ENCODE measurements at regions of chr12 and their contacts with region 1.

Region 1: GRCh38 chr12:15789220-15790171 is at the start of gene EPS8:
- DNase-seq: peak; percentile 93
- ATAC-seq: peak; percentile 95
- H3K4me3 ChIP-seq: peak within 1 kb of the TSS; percentile 47 to 86 (median 72)
- H3K4me3 Mint-ChIP-seq: peak within 1 kb of the TSS; percentile 87
- H3K27ac ChIP-seq: peak within 1 kb of the TSS in 1 of 2 donors; percentile 13
- H3K27ac Mint-ChIP-seq: peak within 1 kb of the TSS; percentile 64
- H3K4me1 ChIP-seq: peaks cover 15 to 16% of the 10 kb centered on the region in 2 donors
- H3K4me1 Mint-ChIP-seq: peaks cover 15% of the 10 kb centered on the region
- H3K27me3 ChIP-seq: peaks cover 0 to 51% (median 37%) of the 10 kb centered on the region in 4 experiments
- H3K27me3 Mint-ChIP-seq: peaks cover 53% of the 10 kb centered on the region
- CTCF ChIP-seq: no peak
- total RNA-seq, gene EPS8: 0.78 and 0.96 TPM in 2 replicates

Region 2: DNA sequence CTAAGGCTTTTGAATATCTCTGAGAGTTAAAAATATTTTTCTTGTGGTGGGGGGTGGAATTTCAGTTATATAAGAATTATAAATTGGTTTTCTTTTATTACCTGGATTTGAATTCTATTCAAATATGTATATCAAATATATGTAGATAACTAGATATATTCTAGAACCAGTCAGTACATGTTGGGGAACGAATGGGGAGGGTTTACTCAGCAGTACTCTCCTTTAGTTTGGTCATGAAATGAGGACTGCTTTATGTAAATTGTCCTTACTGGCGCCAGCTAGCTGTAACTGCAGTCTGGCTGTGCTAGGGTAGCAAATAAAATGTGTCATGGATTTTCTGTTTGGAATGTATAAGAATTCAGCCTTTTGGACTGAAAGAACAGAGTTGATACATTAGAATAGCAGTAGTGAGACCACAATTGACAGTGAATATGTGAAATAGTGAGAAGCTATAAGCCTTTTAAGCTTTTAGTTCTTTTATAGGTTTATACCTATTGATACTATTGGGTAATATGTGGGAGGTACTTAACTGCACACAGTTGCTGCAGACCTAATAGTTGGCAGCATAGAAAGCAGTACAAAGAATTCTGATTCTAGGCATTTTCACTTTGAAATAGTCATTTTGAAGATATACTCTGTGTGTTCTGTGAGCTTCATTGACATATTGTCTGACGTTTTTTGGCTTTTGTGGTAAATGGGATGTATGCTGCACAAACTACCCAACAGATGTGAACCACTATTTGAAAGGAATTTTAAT is 1395.0 kb before region 1 on chr12:
- CTCF ChIA-PET with region 1: no interaction called
- POLR2A ChIA-PET with region 1: no interaction called
- intact Hi-C with region 1: loop called (anchors 5 kb)
- DNase-seq: peak; percentile 71
- ATAC-seq: peak; percentile 69
- H3K4me3 ChIP-seq: peak overlapping the region in 4 of 5 experiments; percentile 0 to 55 (median 18)
- H3K4me3 Mint-ChIP-seq: peak overlapping the region; percentile 56
- H3K27ac ChIP-seq: peak overlapping the region; percentile 62 to 67
- H3K27ac Mint-ChIP-seq: peak overlapping the region; percentile 78
- H3K4me1 ChIP-seq: peaks cover 32 to 55% of the 10 kb centered on the region in 2 donors
- H3K4me1 Mint-ChIP-seq: peaks cover 69% of the 10 kb centered on the region
- H3K27me3 ChIP-seq: no peaks in the 10 kb centered on the region
- H3K27me3 Mint-ChIP-seq: no peaks in the 10 kb centered on the region
- CTCF ChIP-seq: no peak

Region 3: GRCh38 chr12:15575671-15576541 is 213.6 kb before region 1 on chr12:
- CTCF ChIA-PET with region 1: no interaction called
- POLR2A ChIA-PET with region 1: no interaction called
- intact Hi-C with region 1: loop called (anchors 10 kb)
- DNase-seq: no peak
- ATAC-seq: no peak
- H3K4me3 ChIP-seq: no peak overlapping the region
- H3K4me3 Mint-ChIP-seq: no peak overlapping the region
- H3K27ac ChIP-seq: no peak overlapping the region
- H3K27ac Mint-ChIP-seq: no peak overlapping the region
- H3K4me1 ChIP-seq: peaks cover 7 to 9% of the 10 kb centered on the region in 2 donors
- H3K4me1 Mint-ChIP-seq: peaks cover 6% of the 10 kb centered on the region
- H3K27me3 ChIP-seq: no peaks in the 10 kb centered on the region
- H3K27me3 Mint-ChIP-seq: no peaks in the 10 kb centered on the region
- CTCF ChIP-seq: no peak

Region 4: DNA sequence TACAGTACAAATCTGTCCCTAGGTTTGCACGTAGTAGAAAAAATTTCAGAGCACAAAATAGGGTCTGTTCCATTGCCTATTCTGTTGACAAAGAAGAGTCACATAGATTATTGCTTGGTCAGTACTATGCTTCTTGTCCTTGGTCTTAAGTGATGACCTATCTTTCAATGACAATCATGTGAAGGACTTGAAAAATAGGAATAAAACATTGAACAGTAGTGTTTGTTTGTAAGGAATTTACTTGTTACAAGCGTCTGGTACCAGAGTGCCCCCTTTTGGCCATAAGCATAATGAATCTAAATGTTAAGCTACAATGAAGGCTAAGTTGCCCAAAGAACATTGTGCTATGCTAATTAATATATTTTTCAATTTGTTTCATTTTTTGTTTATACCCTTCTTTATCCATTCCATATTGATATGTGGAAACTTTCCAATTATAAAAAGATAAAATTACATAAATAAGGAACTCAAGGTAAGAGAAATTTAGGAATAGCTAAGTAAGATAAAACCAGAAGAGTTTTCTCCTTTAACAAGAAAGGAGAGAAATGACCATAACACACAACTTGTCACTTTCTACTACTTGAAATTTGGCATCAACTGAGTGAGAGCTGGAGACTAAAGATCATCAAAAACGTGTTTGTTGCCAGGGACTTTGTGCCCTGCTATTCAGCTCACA is 205.0 kb before region 1 on chr12:
- CTCF ChIA-PET with region 1: interaction called, 11 read pairs
- POLR2A ChIA-PET with region 1: no interaction called
- intact Hi-C with region 1: loop called (anchors 10 kb)
- DNase-seq: peak; percentile 76
- ATAC-seq: peak; percentile 63
- H3K4me3 ChIP-seq: no peak overlapping the region
- H3K4me3 Mint-ChIP-seq: no peak overlapping the region
- H3K27ac ChIP-seq: no peak overlapping the region
- H3K27ac Mint-ChIP-seq: peak overlapping the region; percentile 65
- H3K4me1 ChIP-seq: no peaks in the 10 kb centered on the region
- H3K4me1 Mint-ChIP-seq: no peaks in the 10 kb centered on the region
- H3K27me3 ChIP-seq: no peaks in the 10 kb centered on the region
- H3K27me3 Mint-ChIP-seq: no peaks in the 10 kb centered on the region
- CTCF ChIP-seq: peak; percentile 86

Region 5: DNA sequence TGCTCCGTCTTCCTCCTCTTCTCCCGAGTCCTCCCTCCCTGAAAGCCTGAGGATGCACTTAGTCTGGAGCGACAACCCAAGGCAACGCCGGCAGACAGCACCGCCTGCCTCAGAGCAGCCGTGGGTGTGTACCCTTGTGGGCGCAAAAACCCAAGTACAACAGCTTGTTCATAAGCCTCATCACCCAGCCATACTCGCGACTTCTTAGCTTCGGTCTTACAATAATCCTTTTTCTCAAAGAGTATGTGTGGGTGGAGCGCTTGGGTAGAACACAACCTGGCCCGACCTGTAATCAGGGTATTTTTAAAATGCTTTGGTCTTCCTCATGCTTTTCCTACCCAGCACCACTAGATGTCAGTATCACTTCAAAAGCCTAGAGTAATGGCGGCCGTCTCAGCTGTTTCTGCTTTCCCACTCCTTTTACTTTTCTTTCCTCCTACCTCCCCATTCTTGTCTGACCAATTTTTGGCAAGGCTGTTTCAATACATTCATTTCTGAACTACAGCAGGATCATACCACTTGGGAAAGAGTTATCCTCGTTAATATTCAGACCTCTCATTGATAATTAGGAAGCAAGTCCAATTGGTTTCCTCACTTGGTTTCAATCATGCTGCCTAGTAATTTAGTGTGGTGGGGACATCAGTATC is 199.2 kb before region 1 on chr12:
- CTCF ChIA-PET with region 1: interaction called, 11 read pairs
- POLR2A ChIA-PET with region 1: no interaction called
- intact Hi-C with region 1: loop called (anchors 1 kb)
- DNase-seq: peak; percentile 79
- ATAC-seq: peak; percentile 91
- H3K4me3 ChIP-seq: peak overlapping the region in 1 of 5 experiments; percentile 20
- H3K4me3 Mint-ChIP-seq: peak overlapping the region; percentile 81
- H3K27ac ChIP-seq: no peak overlapping the region
- H3K27ac Mint-ChIP-seq: peak overlapping the region; percentile 64
- H3K4me1 ChIP-seq: peaks cover 6 to 8% of the 10 kb centered on the region in 2 donors
- H3K4me1 Mint-ChIP-seq: peaks cover 9% of the 10 kb centered on the region
- H3K27me3 ChIP-seq: no peaks in the 10 kb centered on the region
- H3K27me3 Mint-ChIP-seq: no peaks in the 10 kb centered on the region
- CTCF ChIP-seq: peak; percentile 91

Region 6: GRCh38 chr12:15634010-15634683 is 155.3 kb before region 1 on chr12:
- CTCF ChIA-PET with region 1: no interaction called
- POLR2A ChIA-PET with region 1: no interaction called
- intact Hi-C with region 1: no loop called
- DNase-seq: no peak
- ATAC-seq: no peak
- H3K4me3 ChIP-seq: no peak overlapping the region
- H3K4me3 Mint-ChIP-seq: no peak overlapping the region
- H3K27ac ChIP-seq: no peak overlapping the region
- H3K27ac Mint-ChIP-seq: no peak overlapping the region
- H3K4me1 ChIP-seq: no peaks in the 10 kb centered on the region
- H3K4me1 Mint-ChIP-seq: no peaks in the 10 kb centered on the region
- H3K27me3 ChIP-seq: no peaks in the 10 kb centered on the region
- H3K27me3 Mint-ChIP-seq: no peaks in the 10 kb centered on the region
- CTCF ChIP-seq: no peak

Region 7: GRCh38 chr12:15899282-15899870 is 109.9 kb after region 1 on chr12:
- CTCF ChIA-PET with region 1: no interaction called
- POLR2A ChIA-PET with region 1: no interaction called
- intact Hi-C with region 1: loop called (anchors 5 kb)
- DNase-seq: peak; percentile 59
- ATAC-seq: peak; percentile 36
- H3K4me3 ChIP-seq: no peak overlapping the region
- H3K4me3 Mint-ChIP-seq: no peak overlapping the region
- H3K27ac ChIP-seq: peak overlapping the region in 1 of 2 donors; percentile 45
- H3K27ac Mint-ChIP-seq: peak overlapping the region; percentile 34
- H3K4me1 ChIP-seq: no peaks in the 10 kb centered on the region
- H3K4me1 Mint-ChIP-seq: peaks cover 3% of the 10 kb centered on the region
- H3K27me3 ChIP-seq: no peaks in the 10 kb centered on the region
- H3K27me3 Mint-ChIP-seq: no peaks in the 10 kb centered on the region
- CTCF ChIP-seq: peak; percentile 95

Measured in B cell (primary cell).